Activated T-helper 2 cell treated with anti-CD3 and anti-CD28 coated beads, Interferon-gamma antibody, Interleukin-2, Interleukin-4, amounts not matched to agents 10 μg/mL and 5 μg/mL and 100 μg/mL, durations not matched to agents 14 hours and 24 hours and 36 hours (primary cell): ENCODE measurements at regions of chr1 and their contacts with region 1.

Region 1: GRCh38 chr1:88180449-88181108 is 503.5 kb upstream of the PKN2 start:
- DNase-seq: peak; percentile 45
- H3K4me3 Mint-ChIP-seq: no peak overlapping the region
- H3K27ac Mint-ChIP-seq: no peak overlapping the region
- H3K4me1 Mint-ChIP-seq: no peaks in the 10 kb centered on the region
- H3K27me3 Mint-ChIP-seq: peaks cover 2% of the 10 kb centered on the region

Region 2: GRCh38 chr1:88371396-88371795 is 190.8 kb after region 1 on chr1:
- intact Hi-C with region 1: no loop called
- DNase-seq: no peak
- H3K4me3 Mint-ChIP-seq: no peak overlapping the region
- H3K27ac Mint-ChIP-seq: no peak overlapping the region
- H3K4me1 Mint-ChIP-seq: no peaks in the 10 kb centered on the region
- H3K27me3 Mint-ChIP-seq: no peaks in the 10 kb centered on the region

Region 3: DNA sequence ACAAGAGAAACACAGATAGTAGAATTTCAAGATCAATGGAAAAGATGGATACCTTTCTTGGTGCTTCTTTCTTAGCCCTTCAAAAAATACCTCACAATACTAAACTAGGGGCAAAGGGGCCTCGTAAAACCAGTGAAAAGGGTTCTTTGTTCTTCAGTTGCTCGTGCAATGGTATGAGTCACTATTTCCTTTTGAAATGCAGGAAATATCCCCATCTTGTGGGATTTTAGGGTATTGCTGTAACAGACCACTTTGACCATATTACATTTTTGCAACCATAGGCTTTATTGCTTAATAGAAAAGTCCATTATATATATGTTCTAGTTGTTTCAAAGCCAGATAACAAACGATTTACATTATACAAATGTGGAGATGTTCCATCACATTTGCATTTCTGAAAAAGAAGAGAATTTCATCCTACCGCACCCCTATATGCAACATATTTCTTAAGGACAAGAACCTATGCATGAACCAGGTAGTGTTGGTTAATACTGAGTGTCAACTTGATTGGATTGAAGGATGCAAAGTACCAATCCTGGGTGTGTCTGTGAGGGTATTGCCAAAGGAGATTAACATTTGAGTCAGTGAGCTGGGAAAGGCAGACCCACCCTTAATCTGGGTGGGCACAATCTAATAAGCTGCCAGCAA is 414.9 kb after region 1 on chr1:
- intact Hi-C with region 1: loop called (anchors 5 kb)
- DNase-seq: no peak
- H3K4me3 Mint-ChIP-seq: no peak overlapping the region
- H3K27ac Mint-ChIP-seq: no peak overlapping the region
- H3K4me1 Mint-ChIP-seq: no peaks in the 10 kb centered on the region
- H3K27me3 Mint-ChIP-seq: no peaks in the 10 kb centered on the region